ENCODE measurements at regions of chr16 and their contacts with region 1.

Region 1: GRCh38 chr16:68264128-68265077 is at the start of gene SLC7A6:
- DNase-seq: peak; percentile 55 to 77 (median 69)
- H3K4me3 ChIP-seq: peak within 1 kb of the TSS; percentile 75
- H3K27ac ChIP-seq: peak within 1 kb of the TSS; percentile 49 to 57
- H3K4me1 ChIP-seq: no peaks in the 10 kb centered on the region
- H3K27me3 ChIP-seq: no peaks in the 10 kb centered on the region
- CTCF ChIP-seq: peak in 2 of 3 donors; percentile 69 to 75
- EP300 ChIP-seq: no peak
- POLR2A ChIP-seq: no peak
- total RNA-seq, gene SLC7A6: 5.5 to 14.4 (median 9.0) TPM

Region 2: DNA sequence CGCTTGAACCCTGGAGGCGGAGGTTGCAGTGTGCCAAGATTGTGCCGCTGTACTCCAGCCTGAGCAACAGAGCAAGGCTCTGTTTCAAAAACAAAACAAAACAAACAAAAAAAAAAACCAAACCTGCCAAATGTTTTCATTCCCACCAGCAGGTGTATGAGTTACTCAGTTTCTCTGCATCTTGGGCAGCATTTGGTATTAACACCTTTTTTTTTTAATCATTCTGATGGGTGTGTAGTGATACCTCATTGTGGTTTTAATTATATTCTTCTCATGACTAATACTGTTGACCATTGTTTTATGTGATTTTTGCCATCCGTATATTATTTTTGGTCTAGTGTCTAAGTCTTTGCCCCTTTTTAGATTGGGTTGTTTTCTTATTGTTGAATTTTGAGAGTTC is 163.9 kb before region 1 on chr16:
- intact Hi-C with region 1: no loop called
- DNase-seq: no peak
- H3K4me3 ChIP-seq: no peak overlapping the region
- H3K27ac ChIP-seq: no peak overlapping the region
- H3K4me1 ChIP-seq: no peaks in the 10 kb centered on the region
- H3K27me3 ChIP-seq: no peaks in the 10 kb centered on the region
- CTCF ChIP-seq: no peak
- EP300 ChIP-seq: no peak
- POLR2A ChIP-seq: no peak

Region 3: GRCh38 chr16:68328151-68328859 is 63.9 kb after region 1 on chr16:
- intact Hi-C with region 1: loop called (anchors 5 kb)
- DNase-seq: peak; percentile 63 to 79 (median 70)
- H3K4me3 ChIP-seq: no peak overlapping the region
- H3K27ac ChIP-seq: no peak overlapping the region
- H3K4me1 ChIP-seq: no peaks in the 10 kb centered on the region
- H3K27me3 ChIP-seq: no peaks in the 10 kb centered on the region
- CTCF ChIP-seq: peak in 2 of 3 donors; percentile 77 to 82
- EP300 ChIP-seq: no peak
- POLR2A ChIP-seq: no peak

Region 4: GRCh38 chr16:68978271-68978954 is 714.0 kb after region 1 on chr16:
- intact Hi-C with region 1: no loop called
- DNase-seq: no peak
- H3K4me3 ChIP-seq: no peak overlapping the region
- H3K27ac ChIP-seq: no peak overlapping the region
- H3K4me1 ChIP-seq: no peaks in the 10 kb centered on the region
- H3K27me3 ChIP-seq: no peaks in the 10 kb centered on the region
- CTCF ChIP-seq: no peak
- EP300 ChIP-seq: no peak
- POLR2A ChIP-seq: no peak

Measured in ovary (tissue), 10 donors.